Sigmoid colon (tissue), 7 donors: ENCODE measurements at regions of chr11 and their contacts with region 1.

Region 1: GRCh38 chr11:66311965-66312548 is 4.8 kb downstream of the CD248 start:
- DNase-seq: peak; percentile 96
- H3K4me3 ChIP-seq: peak overlapping the region; percentile 47 to 58 (median 52)
- H3K27ac ChIP-seq: peak overlapping the region; percentile 86 to 94 (median 90)
- H3K4me1 ChIP-seq: peaks cover 0 to 47% (median 42%) of the 10 kb centered on the region in 4 donors
- H3K27me3 ChIP-seq: no peaks in the 10 kb centered on the region
- CTCF ChIP-seq: peak; percentile 8 to 98 (median 61)
- EP300 ChIP-seq: no peak
- POLR2A ChIP-seq: no peak

Region 2: GRCh38 chr11:66328307-66329144 is 16.5 kb after region 1 on chr11:
- intact Hi-C with region 1: loop called (anchors 1 kb)
- DNase-seq: peak; percentile 88
- H3K4me3 ChIP-seq: no peak overlapping the region
- H3K27ac ChIP-seq: peak overlapping the region; percentile 1 to 81 (median 54)
- H3K4me1 ChIP-seq: peaks cover 0 to 34% (median 31%) of the 10 kb centered on the region in 4 donors
- H3K27me3 ChIP-seq: no peaks in the 10 kb centered on the region
- CTCF ChIP-seq: peak; percentile 95 to 99 (median 98)
- EP300 ChIP-seq: no peak
- POLR2A ChIP-seq: no peak

Region 3: DNA sequence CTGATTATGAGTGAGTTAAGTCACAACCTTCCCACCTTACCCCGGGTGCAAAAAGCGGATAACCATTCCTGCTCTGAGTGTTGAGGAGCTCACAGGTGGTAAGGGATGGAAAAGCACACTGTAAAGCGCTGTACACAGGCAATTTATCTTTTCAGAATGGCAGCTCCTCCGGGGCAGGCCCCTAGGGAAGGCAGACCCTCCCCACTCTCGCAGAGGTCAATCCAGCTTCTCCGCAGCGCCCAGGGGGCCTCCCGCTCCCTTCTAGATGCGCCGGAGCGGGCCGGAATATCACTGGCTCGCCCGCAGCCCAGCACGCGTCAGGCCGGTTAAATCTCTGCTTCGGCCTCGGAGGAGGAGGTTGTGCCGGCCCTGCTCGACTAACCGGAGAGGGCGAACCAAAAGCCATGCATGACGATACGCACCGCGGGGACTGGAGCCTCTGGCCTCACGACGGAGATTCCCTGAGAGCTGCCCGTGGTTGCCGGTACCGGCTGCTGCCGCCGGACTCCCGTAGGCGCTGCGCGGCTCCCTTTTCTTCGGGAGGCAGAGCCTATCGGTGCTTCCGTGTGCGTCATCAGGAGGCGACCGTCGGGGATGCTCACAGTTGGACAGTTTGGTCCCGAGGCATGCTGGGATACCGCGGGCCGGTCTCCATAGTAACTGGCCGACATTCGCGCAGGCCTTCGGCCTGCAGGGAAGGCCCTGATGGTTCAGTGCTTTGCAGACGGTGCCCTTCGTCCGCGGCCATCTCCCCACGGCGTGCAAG is 32.7 kb after region 1 on chr11 and contains the start of gene BRMS1:
- intact Hi-C with region 1: loop called (anchors 1 kb)
- DNase-seq: peak; percentile 99
- H3K4me3 ChIP-seq: peak within 1 kb of the TSS; percentile 82 to 97 (median 90)
- H3K27ac ChIP-seq: peak within 1 kb of the TSS; percentile 85 to 91 (median 87)
- H3K4me1 ChIP-seq: peaks cover 4 to 41% (median 40%) of the 10 kb centered on the region in 4 donors
- H3K27me3 ChIP-seq: no peaks in the 10 kb centered on the region
- CTCF ChIP-seq: peak in 3 of 4 experiments; percentile 6 to 42 (median 12)
- EP300 ChIP-seq: peak in 1 of 4 donors; percentile 41
- POLR2A ChIP-seq: peak; percentile 78 to 87
- total RNA-seq, gene BRMS1: 20.2 to 36.2 (median 24.9) TPM

Region 4: GRCh38 chr11:66393954-66394353 is 81.9 kb after region 1 on chr11:
- intact Hi-C with region 1: no loop called
- DNase-seq: no peak
- H3K4me3 ChIP-seq: no peak overlapping the region
- H3K27ac ChIP-seq: peak overlapping the region in 1 of 4 donors; percentile 18
- H3K4me1 ChIP-seq: peaks cover 0 to 4% (median 0%) of the 10 kb centered on the region in 4 donors
- H3K27me3 ChIP-seq: no peaks in the 10 kb centered on the region
- CTCF ChIP-seq: no peak
- EP300 ChIP-seq: no peak
- POLR2A ChIP-seq: no peak